ENCODE measurements at regions of chr1 and their contacts with region 1.

Region 1: DNA sequence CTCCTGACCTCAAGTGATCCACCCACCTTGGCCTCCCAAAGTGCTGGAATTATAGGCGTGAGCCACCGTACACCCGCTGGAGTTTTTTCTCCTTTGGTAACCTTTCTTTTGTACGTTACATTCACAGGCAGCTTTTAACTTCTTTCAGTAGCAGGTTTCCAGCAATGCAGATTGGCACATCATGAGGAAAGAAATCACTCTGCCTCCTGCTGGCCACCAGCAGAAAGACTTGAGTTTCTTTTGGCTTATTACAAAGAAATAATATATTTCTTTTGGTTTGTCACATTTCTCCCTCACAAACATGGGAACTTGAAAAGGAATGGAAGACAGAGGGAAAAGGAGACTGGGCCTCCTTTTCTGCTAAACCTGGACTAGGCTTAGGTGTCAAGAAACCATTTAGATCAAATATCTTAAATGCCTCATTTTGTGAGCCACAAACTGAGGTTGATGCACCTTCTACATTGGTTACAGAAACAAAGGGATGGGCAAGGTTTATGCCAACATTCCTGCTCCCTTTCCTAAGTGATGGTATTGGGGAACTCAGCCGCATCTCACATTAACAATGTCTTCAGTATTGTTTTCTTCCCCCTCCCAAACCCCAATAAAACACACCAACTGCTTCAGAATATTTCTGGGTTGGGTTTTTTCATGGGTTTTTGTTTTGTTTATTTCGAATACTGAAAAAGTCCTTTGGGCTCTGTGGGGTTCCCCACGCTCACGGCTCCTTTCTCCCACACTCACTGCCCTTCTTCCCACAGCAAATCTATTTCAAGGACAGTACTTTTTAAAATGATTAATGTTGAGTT is 7.7 kb downstream of the ENSA start:
- H3K4me3 Mint-ChIP-seq: peak overlapping the region; percentile 32
- H3K27ac Mint-ChIP-seq: peak overlapping the region; percentile 62
- H3K4me1 Mint-ChIP-seq: peaks cover 70% of the 10 kb centered on the region
- H3K27me3 Mint-ChIP-seq: no peaks in the 10 kb centered on the region

Region 2: DNA sequence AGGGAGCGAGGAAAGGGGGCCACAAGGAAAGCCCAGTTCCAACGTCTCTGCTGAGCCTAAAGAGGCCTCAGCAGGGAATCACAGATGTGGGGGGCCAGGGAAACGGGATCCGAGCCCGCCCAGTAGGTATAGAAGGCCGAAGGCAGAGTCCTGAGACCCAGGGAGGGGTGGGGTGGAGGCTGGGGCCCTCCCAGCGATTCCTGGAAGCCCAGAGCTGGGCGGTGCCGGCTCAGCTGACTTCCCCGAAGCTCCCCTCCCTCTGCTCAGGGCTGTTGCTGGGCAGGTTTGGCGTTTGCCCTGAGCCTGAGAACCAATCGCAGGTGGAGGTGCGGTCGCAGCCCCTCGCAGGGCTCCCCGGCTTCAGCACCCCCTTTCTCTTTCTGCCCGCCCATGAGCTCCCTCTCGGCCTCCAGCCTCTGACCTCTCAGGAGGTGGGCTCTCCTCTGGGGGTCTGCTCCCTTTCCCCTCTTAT is 59.7 kb before region 1 on chr1:
- intact Hi-C with region 1: loop called (anchors 5 kb)
- H3K4me3 Mint-ChIP-seq: peak overlapping the region; percentile 82
- H3K27ac Mint-ChIP-seq: peak overlapping the region; percentile 99
- H3K4me1 Mint-ChIP-seq: peaks cover 88% of the 10 kb centered on the region
- H3K27me3 Mint-ChIP-seq: no peaks in the 10 kb centered on the region